Psoas muscle (tissue), 8 donors: ENCODE measurements at regions of chr18 and their contacts with region 1.

Region 1: DNA sequence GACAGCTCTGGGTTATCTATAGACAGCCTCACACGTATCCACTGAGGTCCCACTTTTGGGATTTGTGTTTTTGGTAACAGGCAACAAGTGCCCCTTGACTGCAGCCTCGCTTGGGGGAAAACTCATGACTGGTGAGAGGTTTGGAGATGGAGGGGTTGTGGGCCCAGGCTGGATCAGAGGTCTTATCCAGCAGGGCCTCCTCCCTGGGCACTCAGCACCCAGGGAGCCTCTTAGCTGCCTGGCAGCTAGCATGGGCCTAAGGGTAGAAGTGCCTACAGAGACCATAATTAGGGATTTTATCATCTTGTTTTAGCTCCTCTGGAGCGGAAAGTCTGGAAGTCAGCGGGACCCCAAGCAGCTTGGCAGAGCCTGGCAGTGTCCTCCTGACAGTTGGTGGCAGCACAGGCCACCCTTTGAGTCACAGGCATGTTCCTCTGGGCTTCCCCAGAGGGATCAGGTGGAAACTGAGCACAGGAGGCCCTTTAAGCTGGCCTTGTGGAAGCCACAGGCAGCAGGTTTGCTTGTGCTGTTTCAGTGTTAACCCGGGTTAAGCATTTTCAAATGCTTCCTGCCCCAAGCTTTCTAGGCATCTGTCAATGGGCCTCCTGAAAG is 143.1 kb downstream of the KCTD1 start:
- DNase-seq: no peak
- ATAC-seq: peak; percentile 56 to 86 (median 86)
- H3K4me3 ChIP-seq: no peak overlapping the region
- H3K27ac ChIP-seq: no peak overlapping the region
- H3K4me1 ChIP-seq: no peaks in the 10 kb centered on the region
- H3K27me3 ChIP-seq: no peaks in the 10 kb centered on the region
- CTCF ChIP-seq: peak; percentile 49

Region 2: GRCh38 chr18:26453386-26453901 is 48.1 kb after region 1 on chr18:
- intact Hi-C with region 1: no loop called
- DNase-seq: no peak
- ATAC-seq: no peak
- H3K4me3 ChIP-seq: no peak overlapping the region
- H3K27ac ChIP-seq: no peak overlapping the region
- H3K4me1 ChIP-seq: no peaks in the 10 kb centered on the region
- H3K27me3 ChIP-seq: peaks cover 0 to 4% (median 0%) of the 10 kb centered on the region in 3 donors
- CTCF ChIP-seq: no peak

Region 3: DNA sequence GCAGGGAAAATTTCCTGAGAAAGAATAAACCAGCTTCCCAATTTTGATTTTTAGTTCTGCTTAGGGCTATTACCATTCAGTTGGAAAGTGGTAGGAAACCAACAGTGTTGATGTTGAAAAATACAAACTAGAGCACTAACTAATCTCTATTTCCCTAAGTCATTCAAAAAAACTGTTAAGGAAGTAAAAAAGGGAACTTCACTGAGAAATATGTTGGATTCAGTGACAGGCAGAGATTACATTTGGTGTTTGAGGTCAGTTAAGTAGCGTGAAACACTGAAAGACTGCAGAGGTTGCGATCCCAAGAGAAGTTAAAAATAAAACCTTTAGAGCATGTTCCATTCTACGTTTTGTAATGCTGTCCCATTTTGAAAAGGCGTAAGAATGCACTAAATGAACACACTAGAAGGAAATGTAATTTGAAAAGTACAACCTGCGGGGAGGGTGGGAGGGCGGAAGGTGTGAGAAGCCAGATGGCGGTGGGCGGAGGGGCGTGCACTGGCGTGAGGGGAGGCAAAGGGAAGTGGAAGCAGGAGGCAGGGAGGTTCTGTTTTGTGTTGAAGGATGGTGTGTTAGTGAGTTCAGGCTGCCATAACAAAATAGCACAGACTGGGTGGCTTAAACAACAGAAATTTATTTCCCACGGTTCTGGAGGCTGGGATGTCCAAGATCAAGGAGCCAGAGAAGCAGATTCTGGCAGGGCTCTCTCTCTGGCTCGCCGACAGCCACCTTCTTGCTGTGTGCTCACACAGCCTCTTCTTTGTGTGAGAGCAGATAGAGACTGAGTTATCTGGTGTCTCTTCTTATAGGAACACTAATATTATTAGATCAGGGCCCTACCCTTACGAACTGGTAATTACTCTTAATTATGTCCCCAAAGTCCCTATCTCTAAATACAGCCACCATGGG is 237.4 kb after region 1 on chr18:
- intact Hi-C with region 1: loop called in 1 of 2 experiments (anchors 10 kb)
- DNase-seq: no peak
- ATAC-seq: no peak
- H3K4me3 ChIP-seq: no peak overlapping the region
- H3K27ac ChIP-seq: no peak overlapping the region
- H3K4me1 ChIP-seq: no peaks in the 10 kb centered on the region
- H3K27me3 ChIP-seq: no peaks in the 10 kb centered on the region
- CTCF ChIP-seq: no peak

Region 4: DNA sequence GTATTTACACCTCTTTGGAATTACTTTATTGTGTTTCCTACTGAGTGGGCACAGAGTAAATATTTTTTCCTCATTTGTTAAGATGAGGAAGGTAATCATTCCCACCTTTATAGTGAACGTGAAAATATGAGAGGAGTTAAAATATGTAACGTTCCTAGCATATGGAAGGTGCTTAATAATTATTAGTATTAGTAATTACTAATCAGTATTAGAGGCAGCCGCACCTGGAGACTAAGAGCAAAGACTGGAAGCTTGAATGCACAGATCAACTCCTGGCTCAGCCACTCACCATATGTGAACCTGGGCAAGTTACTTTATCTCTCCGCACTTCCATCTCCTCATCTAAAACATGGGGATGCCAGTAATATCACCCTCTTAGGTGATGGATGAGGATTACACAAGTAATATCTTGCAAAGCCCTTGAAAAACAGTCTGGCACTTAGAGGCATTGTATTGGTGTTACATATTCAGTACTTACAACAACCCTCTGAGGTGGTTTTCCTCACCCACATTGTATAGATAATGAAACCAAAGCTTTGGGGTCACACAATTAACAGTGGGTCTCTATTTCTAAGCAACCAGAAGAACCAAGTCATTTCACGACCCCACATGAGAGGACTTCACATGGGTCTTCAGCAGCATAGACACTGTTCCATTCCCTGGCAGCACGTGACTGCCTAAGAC is 243.4 kb after region 1 on chr18:
- intact Hi-C with region 1: loop called (anchors 2 to 10 kb)
- DNase-seq: no peak
- ATAC-seq: no peak
- H3K4me3 ChIP-seq: no peak overlapping the region
- H3K27ac ChIP-seq: no peak overlapping the region
- H3K4me1 ChIP-seq: no peaks in the 10 kb centered on the region
- H3K27me3 ChIP-seq: peaks cover 0 to 33% (median 0%) of the 10 kb centered on the region in 3 donors
- CTCF ChIP-seq: no peak

Region 5: DNA sequence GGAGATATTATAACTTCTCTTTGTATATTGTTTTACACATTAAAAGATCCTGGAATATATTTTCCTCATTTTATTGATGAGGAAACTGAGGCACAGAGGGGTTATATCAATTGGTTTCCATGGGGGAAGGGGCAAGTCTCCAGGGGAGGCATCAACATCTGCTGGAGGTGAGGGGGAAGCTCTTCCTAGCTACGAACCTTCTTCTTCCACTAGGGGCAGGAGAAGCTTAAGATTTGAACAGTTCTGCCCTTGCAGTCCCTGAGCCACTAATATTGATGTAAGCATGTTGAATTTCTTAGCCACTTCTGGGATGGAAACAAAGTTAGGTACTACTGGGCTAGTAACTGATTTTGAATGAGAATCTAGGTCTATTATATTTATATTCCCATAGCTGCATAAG is 600.3 kb after region 1 on chr18:
- intact Hi-C with region 1: loop called in 1 of 2 experiments (anchors 10 kb)
- DNase-seq: no peak
- ATAC-seq: no peak
- H3K4me3 ChIP-seq: no peak overlapping the region
- H3K27ac ChIP-seq: no peak overlapping the region
- H3K4me1 ChIP-seq: no peaks in the 10 kb centered on the region
- H3K27me3 ChIP-seq: no peaks in the 10 kb centered on the region
- CTCF ChIP-seq: peak; percentile 23